ENCODE measurements at regions of chr17 and their contacts with region 1.

Region 1: DNA sequence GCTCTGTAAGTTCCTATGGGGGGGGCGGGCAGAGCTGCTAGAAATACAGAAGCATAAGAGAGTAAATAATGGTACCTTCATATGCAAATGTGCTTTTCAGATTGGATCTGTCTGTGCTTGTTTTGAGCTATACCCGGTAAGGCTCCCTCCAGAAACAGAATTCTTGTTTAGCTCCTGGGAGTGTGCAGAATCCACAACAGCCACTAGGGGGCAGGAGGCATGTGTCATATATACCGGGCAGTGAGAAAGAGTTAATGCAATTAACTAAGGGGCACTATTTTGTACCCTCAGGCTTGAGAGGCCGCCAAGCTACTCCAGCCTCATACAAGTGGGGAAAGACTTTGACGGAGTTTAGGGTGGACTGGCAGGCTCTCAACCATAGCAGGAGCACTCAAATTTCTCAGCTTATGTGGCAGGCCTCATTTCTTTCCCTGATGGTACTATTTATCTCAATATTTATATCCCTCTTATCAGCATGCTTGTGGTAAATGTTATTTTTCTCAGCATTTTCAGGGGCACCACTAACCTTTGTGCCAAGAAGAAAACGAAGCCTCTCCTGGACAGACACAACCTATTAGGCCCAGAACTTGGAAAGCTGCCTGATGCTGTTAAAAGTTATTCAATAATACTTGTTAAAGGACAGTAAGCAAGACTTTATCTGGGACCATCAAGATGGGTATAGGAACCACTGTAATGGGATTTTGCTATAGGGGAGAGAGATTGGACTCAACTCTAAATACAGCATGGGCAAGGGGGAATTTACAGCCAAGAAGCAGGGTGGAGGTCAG is 10.7 kb upstream of the CENPV start:
- DNase-seq: peak; percentile 87
- ATAC-seq: peak; percentile 96
- H3K4me3 Mint-ChIP-seq: no peak overlapping the region
- H3K27ac Mint-ChIP-seq: no peak overlapping the region
- H3K4me1 Mint-ChIP-seq: peaks cover 3% of the 10 kb centered on the region
- H3K27me3 Mint-ChIP-seq: peaks cover 5% of the 10 kb centered on the region

Region 2: DNA sequence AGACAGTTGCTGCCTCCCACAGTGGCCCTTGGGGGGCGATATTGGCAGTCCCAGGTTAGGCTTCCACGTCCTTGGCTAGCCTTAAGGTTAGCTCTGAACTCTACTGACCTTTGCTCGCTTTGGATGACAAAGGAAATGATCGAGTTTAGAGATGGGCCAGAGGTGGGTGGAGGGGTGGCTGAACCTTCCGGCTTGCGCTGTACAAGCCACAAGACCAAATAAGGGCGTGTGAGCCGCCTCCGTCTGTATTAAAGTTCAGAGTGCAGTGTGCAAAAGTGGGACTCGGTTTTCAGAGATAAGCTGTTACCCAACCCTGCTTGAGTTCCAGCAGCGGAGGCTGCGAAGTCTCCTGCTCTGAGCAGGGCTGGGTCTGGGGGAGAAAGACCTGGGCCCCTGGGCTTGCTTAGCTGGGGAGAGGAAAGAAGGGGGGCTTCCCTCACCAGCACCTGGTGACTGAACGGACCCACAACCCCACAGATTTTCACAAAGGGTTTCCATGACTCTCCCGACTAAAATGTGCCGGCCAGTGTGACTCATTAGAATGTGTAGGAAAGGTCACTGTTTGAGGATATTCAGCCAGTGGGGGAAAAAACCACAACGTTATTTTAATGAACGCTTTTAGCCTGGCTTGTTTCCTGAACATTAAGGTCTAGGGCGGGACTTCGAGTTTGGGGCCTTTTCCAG is 77.8 kb before region 1 on chr17:
- CTCF ChIA-PET with region 1: interaction called, 17 read pairs
- POLR2A ChIA-PET with region 1: no interaction called
- DNase-seq: peak; percentile 93
- ATAC-seq: peak; percentile 96
- H3K4me3 Mint-ChIP-seq: peak overlapping the region; percentile 72
- H3K27ac Mint-ChIP-seq: peak overlapping the region; percentile 96
- H3K4me1 Mint-ChIP-seq: peaks cover 50% of the 10 kb centered on the region
- H3K27me3 Mint-ChIP-seq: no peaks in the 10 kb centered on the region

Region 3: DNA sequence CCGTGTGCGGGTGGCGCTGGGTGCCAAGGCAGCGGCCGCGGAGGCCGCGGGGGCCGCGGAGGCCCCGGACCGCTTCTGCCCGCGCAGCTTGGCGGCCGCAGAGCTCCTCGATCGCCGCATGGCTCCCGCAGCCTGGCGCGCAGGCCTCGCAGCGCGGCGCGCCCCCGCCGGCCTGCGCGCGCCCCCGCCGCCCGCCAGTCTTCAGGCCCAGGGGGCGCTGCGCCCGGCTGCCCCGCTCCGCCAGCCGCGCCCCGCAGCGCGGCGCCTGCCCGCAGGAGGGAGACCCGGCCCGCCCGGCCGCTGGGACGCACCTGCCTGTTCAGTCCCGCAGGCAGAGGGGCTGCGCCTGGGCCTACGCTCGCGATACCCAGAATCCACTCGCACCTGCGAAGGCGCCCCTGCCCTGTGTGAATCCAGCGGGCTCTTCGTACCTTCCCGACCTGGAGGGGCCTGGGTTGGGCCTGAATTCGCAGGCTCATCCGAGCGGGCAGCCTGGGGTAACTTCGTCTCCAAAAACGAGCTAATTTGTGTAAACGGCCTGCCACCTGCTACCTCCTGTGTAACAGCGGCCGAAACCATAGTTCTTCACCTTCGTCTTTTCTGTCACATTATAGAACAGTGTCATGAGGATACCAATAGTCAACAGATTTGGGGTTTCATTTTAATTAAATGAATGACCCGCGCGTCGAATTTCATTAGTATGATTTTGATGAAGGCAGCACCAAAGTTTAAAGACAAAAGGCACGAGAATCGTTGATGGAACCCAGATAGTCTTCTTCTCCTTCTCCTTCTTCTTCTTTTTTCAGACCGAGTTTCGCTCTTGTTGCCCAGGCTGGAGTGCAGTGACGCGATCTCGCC is 10.4 kb before region 1 on chr17 and contains the start of gene CENPV:
- CTCF ChIA-PET with region 1: interaction called, 26 read pairs
- POLR2A ChIA-PET with region 1: no interaction called
- DNase-seq: peak; percentile 67
- ATAC-seq: peak; percentile 87
- H3K4me3 Mint-ChIP-seq: peak within 1 kb of the TSS; percentile 83
- H3K27ac Mint-ChIP-seq: peak within 1 kb of the TSS; percentile 79
- H3K4me1 Mint-ChIP-seq: peaks cover 25% of the 10 kb centered on the region
- H3K27me3 Mint-ChIP-seq: peaks cover 9% of the 10 kb centered on the region
- total RNA-seq, gene CENPV: 28.6 to 36.4 TPM

Region 4: DNA sequence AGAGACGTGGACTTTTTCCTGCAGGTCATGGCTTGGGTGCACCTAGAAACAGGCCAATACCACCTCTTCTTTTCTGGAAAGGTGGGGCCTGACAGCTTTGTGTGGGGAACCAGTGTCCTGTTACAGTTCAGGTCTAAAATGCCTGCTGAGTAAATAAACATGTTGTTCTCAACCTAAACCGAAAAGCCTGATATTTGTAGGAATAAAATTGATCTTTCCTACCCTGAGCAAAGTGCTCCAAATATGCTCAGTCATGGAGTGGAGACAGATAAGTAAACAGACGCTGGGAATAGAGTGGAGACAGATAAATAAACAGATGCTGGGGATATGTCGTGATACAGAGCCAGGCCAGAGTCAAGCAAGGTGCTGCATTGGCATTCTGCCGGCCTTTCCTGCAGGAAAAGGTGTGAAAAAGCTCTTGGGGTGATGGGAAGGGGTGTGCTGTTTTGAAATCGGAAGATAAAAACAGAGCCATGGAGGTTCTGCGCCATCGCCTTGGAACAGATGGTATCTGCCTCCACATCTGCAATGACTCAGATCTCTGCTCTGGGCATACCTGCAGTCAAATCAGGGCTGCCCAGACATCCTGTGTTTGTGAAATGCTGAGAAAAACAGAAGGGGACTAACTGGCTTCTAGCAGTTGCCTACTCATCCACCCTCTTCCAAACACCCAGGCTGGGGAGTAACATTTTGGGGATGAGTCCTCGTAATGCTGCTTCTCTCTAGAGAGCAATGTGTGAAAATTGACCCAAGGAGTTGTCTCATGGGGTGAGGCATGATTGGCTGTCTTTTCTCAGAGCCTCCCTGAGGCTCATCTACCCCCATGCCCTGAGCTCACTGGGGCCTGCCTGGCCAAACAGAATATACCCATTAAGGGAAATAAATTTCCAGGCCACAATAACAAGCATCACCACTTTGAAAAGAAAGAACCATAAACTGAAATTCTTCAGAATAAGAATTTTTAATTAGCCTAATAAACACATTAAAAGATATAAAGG is 34.6 kb after region 1 on chr17:
- CTCF ChIA-PET with region 1: no interaction called
- POLR2A ChIA-PET with region 1: no interaction called
- DNase-seq: no peak
- ATAC-seq: no peak
- H3K4me3 Mint-ChIP-seq: no peak overlapping the region
- H3K27ac Mint-ChIP-seq: no peak overlapping the region
- H3K4me1 Mint-ChIP-seq: peaks cover 9% of the 10 kb centered on the region
- H3K27me3 Mint-ChIP-seq: peaks cover 1% of the 10 kb centered on the region

Region 5: DNA sequence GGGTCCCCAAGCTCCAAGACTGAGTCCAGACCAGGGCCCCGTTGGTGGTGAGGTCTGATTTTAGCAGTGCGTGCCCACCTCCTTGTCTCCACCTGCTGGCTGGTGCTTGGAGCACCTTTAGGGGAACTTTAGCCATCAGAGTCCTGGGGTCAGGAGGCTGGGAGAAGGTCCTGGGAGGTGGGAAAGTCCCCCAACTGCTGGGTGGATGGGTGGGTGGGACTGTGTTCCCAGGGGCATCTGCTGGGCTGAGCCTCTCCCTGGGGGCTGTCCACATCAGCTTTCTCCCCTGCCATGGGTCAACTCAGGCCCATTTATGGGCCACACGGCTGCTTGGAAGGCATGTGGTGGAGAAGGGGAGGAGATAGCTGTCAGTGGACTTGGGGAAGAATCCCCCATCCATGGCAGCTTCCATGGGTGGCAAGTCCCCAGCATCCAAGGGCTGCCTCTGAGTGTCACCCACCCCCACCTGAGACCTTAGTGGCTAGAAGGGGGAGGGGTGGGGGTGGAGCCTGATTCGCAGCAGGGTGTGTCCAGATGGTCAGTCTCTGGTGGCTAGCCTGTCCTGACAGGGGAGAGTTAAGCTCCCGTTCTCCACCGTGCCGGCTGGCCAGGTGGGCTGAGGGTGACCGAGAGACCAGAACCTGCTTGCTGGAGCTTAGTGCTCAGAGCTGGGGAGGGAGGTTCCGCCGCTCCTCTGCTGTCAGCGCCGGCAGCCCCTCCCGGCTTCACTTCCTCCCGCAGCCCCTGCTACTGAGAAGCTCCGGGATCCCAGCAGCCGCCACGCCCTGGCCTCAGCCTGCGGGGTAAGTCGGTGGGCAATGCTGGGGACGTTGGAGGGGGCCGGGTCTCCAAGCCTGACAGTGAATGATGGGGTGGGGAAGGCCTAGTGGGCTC is 51.3 kb after region 1 on chr17 and contains the start of gene TRPV2:
- CTCF ChIA-PET with region 1: interaction called, 88 read pairs
- POLR2A ChIA-PET with region 1: interaction called, 13 read pairs
- DNase-seq: peak; percentile 78
- ATAC-seq: peak; percentile 55
- H3K4me3 Mint-ChIP-seq: peak within 1 kb of the TSS; percentile 99
- H3K27ac Mint-ChIP-seq: peak within 1 kb of the TSS; percentile 100
- H3K4me1 Mint-ChIP-seq: peaks cover 46% of the 10 kb centered on the region
- H3K27me3 Mint-ChIP-seq: no peaks in the 10 kb centered on the region
- total RNA-seq, gene TRPV2: 124 to 134 TPM

Region 6: DNA sequence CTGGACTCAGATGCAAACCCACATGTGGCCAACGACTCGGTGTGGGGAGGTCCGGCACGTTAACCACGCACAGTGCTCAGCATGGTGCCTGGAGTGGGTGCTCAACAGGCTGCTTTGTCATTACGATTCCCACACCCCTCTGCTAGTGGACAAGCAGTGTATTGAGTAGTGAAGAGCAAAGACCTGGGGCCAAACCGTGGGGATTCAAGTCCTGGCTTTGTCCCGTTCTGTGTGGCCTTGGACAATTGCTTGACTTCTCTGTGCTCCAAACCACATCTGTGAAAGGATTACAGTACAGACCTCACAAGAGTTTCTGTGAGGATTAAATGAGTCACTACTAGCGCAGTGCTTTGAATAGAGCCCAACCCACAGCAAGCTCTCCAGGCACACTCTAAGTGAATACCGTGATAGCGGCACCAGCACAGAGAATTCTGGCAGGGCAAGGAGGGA is 85.2 kb after region 1 on chr17:
- CTCF ChIA-PET with region 1: interaction called, 17 read pairs
- POLR2A ChIA-PET with region 1: no interaction called
- DNase-seq: no peak
- ATAC-seq: no peak
- H3K4me3 Mint-ChIP-seq: no peak overlapping the region
- H3K27ac Mint-ChIP-seq: no peak overlapping the region
- H3K4me1 Mint-ChIP-seq: peaks cover 28% of the 10 kb centered on the region
- H3K27me3 Mint-ChIP-seq: no peaks in the 10 kb centered on the region

Measured in activated CD8-positive, alpha-beta T cell treated with anti-CD3 and anti-CD28 coated beads, Interleukin-2, amount 10 ng/mL, durations not matched to agents 7 days and 5 days (primary cell).